Activated T-helper 2 cell treated with anti-CD3 and anti-CD28 coated beads, Interferon-gamma antibody, Interleukin-2, Interleukin-4, amounts not matched to agents 10 μg/mL and 5 μg/mL and 100 μg/mL, durations not matched to agents 14 hours and 24 hours and 36 hours (primary cell): ENCODE measurements at regions of chr5 and their contacts with region 1.

Region 1: DNA sequence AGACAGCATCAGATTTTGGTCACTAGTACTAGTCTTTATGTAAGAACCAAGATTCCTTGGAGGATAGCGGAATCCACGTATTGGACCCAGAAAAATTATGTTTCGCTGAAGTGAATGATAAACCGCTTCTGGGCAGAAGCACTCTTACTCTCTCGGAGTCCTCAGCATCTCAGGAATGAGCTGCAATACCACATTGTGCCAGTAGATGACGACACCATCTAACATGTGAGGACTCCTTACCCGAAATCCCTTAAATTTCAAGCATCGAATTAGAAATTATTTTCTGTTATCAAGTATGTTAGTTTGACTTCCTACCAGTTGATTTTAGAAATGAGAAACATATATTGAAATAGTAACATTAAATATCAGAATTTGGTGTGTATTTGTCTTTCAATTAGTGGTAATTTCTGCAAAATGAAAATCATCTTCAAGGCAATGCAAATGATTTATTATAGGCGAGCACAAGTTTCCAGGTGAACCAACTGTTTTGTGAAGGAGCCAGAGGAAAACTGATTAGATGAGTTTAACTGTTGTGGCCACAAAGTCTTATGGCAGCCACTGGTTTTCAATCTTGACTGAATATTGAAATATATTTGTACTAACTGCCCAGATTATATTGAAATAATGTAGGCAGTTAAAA is 66.0 kb upstream of the CAMK4 start:
- DNase-seq: peak; percentile 61
- H3K4me3 Mint-ChIP-seq: no peak overlapping the region
- H3K27ac Mint-ChIP-seq: no peak overlapping the region
- H3K4me1 Mint-ChIP-seq: peaks cover 27% of the 10 kb centered on the region
- H3K27me3 Mint-ChIP-seq: peaks cover 1% of the 10 kb centered on the region

Region 2: GRCh38 chr5:111223889-111224563 is 65.8 kb after region 1 on chr5 and contains the start of gene CAMK4:
- intact Hi-C with region 1: loop called (anchors 2 kb)
- DNase-seq: peak; percentile 74
- H3K4me3 Mint-ChIP-seq: peak within 1 kb of the TSS; percentile 97
- H3K27ac Mint-ChIP-seq: peak within 1 kb of the TSS; percentile 97
- H3K4me1 Mint-ChIP-seq: peaks cover 47% of the 10 kb centered on the region
- H3K27me3 Mint-ChIP-seq: no peaks in the 10 kb centered on the region
- total RNA-seq, gene CAMK4: 71.8 and 76.7 TPM in 2 replicates

Region 3: GRCh38 chr5:111254613-111255012 is 96.4 kb after region 1 on chr5:
- intact Hi-C with region 1: loop called (anchors 1 kb)
- DNase-seq: peak; percentile 41
- H3K4me3 Mint-ChIP-seq: peak overlapping the region; percentile 35
- H3K27ac Mint-ChIP-seq: peak overlapping the region; percentile 97
- H3K4me1 Mint-ChIP-seq: peaks cover 70% of the 10 kb centered on the region
- H3K27me3 Mint-ChIP-seq: no peaks in the 10 kb centered on the region

Region 4: DNA sequence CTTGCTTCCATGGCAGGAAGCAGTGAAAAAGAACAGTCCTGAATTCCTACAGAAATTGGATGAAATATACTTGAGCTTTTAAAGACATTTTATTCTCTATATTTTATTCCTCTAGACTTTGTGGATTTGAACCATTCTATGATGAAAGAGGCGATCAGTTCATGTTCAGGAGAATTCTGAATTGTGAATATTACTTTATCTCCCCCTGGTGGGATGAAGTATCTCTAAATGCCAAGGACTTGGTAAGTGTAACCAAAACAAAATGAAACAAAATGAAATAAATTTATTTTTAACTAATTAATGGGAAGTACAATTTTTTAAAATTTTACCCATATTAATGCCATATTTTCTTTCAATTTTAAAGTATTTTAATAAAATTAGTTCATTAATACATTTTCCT is 320.0 kb after region 1 on chr5:
- intact Hi-C with region 1: loop called (anchors 2 kb)
- DNase-seq: no peak
- H3K4me3 Mint-ChIP-seq: no peak overlapping the region
- H3K27ac Mint-ChIP-seq: no peak overlapping the region
- H3K4me1 Mint-ChIP-seq: peaks cover 1% of the 10 kb centered on the region
- H3K27me3 Mint-ChIP-seq: no peaks in the 10 kb centered on the region

Region 5: GRCh38 chr5:112146323-112147226 is 988.4 kb after region 1 on chr5:
- intact Hi-C with region 1: loop called (anchors 2 kb)
- DNase-seq: peak; percentile 20
- H3K4me3 Mint-ChIP-seq: no peak overlapping the region
- H3K27ac Mint-ChIP-seq: no peak overlapping the region
- H3K4me1 Mint-ChIP-seq: no peaks in the 10 kb centered on the region
- H3K27me3 Mint-ChIP-seq: peaks cover 12% of the 10 kb centered on the region